ENCODE measurements at regions of chr10 and their contacts with region 1.

Region 1: GRCh38 chr10:119750391-119751230 is 24.8 kb downstream of the INPP5F start:
- DNase-seq: peak in 9 of 10 donors; percentile 76 to 90 (median 79)
- H3K4me3 ChIP-seq: peak overlapping the region in 40 of 59 donors; percentile 1 to 53 (median 30)
- H3K27ac ChIP-seq: peak overlapping the region in 58 of 59 donors; percentile 1 to 90 (median 77)
- H3K27me3 ChIP-seq: no peaks in the 10 kb centered on the region
- CTCF ChIP-seq: peak; percentile 48 to 98 (median 90)

Region 2: GRCh38 chr10:119608316-119609155 is 142.1 kb before region 1 on chr10:
- intact Hi-C with region 1: loop called in 1 of 2 experiments (anchors 5 kb)
- DNase-seq: peak; percentile 42 to 81 (median 66)
- H3K4me3 ChIP-seq: peak overlapping the region in 56 of 59 donors; percentile 6 to 61 (median 42)
- H3K27ac ChIP-seq: peak overlapping the region in 3 of 59 donors; percentile 11 to 32 (median 27)
- H3K27me3 ChIP-seq: no peaks in the 10 kb centered on the region
- CTCF ChIP-seq: peak in 55 of 56 donors; percentile 44 to 84 (median 65)

Region 3: DNA sequence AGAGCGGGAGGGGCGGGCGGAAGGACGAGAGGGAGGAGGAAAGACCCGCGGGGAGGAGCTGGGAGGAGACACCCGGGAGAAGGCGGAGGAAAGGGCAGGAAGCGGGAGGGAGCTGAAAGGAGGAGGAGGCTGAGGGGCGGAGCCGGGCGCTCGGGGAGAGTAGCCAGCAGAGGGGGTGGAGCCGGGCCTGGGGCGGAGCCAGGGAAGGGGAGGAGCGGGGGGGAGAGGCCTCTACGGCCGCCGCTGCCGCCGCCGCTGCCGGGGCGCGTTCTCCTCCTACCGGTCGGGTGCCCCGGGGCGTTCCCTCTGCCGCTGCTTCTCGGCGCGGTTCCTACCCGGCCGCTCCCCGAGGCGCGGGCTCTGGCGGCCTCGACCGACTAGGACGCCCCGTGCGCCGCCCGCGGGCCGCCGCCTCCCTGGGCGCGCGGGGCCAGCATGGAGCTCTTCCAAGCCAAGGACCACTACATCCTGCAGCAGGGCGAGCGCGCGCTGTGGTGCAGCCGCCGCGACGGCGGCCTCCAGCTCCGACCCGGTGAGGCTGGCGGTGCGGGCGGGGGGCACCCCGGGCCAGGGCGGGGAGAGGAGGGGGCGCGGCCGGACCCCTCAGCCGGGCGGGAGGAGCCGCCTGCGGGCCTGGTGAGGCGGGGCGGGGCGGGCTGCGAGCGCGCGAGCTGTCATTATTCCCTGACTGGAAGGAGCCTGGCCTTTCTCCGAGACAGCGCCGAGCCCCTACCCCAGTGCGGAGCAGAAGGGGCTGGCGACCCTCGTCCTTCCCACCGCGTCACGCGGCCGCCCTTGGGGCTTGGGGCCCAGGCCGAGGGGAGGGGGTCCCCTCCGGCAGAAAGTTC is 24.6 kb before region 1 on chr10 and contains the start of gene INPP5F:
- intact Hi-C with region 1: loop called in 1 of 2 experiments (anchors 2 kb)
- DNase-seq: peak; percentile 94 to 99 (median 98)
- H3K4me3 ChIP-seq: peak within 1 kb of the TSS; percentile 59 to 99 (median 85)
- H3K27ac ChIP-seq: peak within 1 kb of the TSS; percentile 63 to 96 (median 91)
- H3K27me3 ChIP-seq: no peaks in the 10 kb centered on the region
- CTCF ChIP-seq: peak in 48 of 56 donors; percentile 26 to 73 (median 50)
- total RNA-seq, gene INPP5F: 46.3 to 226 (median 146) TPM

Region 4: DNA sequence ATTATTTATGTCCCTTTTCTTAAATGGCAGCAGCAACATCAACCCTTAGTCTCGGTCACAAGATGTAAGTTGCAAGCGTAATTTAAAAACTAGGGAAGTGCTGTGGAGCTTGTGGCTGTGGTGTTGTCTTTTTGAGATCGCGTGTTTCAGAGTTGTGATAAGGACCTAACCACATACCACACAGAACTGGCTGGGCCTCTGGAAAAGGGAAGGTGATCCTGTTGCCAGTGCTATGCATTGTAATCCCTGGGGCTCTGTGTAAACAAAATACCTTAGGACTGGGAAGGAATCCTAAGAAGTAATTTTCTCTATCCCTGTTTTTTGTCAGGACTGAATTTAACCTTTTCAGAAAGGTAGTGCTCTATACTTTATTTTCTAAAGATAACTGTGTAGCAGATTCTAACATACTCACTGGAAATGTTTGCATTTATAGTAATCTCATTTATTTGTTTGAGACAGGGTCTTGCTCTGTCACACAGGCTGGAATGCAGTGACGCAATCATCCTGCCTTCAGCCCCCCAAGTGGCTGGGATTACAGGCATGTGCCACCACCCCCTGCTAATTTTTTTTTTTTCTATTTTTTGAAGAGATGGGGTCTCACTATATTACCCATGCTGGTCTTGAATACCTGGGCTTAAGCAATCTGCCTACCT is 35.6 kb after region 1 on chr10:
- intact Hi-C with region 1: no loop called
- DNase-seq: no peak
- H3K4me3 ChIP-seq: no peak overlapping the region
- H3K27ac ChIP-seq: no peak overlapping the region
- H3K27me3 ChIP-seq: no peaks in the 10 kb centered on the region
- CTCF ChIP-seq: no peak

Region 5: DNA sequence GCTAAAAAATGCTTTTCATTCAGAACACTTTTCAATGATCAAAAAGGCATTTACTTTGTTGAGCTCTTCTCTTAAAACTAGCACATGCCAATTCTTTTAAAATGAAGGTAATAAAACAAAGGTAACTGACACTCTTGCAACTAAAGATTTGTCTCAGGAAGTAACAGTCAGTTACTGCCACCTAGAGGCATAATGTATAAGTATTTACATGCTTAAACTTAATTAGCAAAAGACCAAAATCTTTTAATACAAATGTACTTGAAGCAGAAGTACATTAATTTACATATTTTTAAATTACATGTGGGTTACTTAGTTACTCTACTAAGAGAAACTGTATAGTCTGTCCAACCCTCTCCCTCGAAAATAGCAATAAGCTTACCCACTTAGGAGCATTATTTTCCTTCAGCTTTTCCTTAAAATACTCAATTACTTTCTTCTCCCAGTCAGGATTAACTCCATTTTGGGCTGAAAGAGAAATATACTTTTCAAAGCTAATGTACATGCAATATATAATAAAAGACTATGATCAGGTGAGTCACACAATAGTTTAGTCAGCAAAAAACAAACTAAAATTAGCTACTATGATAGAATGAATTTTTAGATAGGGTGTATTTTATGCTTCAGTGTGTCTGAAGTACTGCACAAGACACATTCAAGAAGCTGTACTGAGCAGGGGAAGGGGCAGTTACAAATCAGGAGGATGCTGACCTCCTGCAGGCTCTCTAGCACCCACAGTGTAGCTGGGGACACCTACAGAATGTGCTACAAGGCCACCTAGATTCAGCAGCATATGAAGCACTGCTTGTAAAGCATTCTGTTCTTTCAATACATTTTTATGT is 109.0 kb after region 1 on chr10:
- intact Hi-C with region 1: loop called (anchors 2 to 5 kb)
- DNase-seq: no peak
- H3K4me3 ChIP-seq: no peak overlapping the region
- H3K27ac ChIP-seq: peak overlapping the region in 2 of 59 donors; percentile 12 to 16
- H3K27me3 ChIP-seq: no peaks in the 10 kb centered on the region
- CTCF ChIP-seq: peak; percentile 59 to 94 (median 74)

Measured in dorsolateral prefrontal cortex (tissue), 120 donors.